AG04450 (cell line): ENCODE measurements at regions of chr16 and their contacts with region 1.

Region 1: DNA sequence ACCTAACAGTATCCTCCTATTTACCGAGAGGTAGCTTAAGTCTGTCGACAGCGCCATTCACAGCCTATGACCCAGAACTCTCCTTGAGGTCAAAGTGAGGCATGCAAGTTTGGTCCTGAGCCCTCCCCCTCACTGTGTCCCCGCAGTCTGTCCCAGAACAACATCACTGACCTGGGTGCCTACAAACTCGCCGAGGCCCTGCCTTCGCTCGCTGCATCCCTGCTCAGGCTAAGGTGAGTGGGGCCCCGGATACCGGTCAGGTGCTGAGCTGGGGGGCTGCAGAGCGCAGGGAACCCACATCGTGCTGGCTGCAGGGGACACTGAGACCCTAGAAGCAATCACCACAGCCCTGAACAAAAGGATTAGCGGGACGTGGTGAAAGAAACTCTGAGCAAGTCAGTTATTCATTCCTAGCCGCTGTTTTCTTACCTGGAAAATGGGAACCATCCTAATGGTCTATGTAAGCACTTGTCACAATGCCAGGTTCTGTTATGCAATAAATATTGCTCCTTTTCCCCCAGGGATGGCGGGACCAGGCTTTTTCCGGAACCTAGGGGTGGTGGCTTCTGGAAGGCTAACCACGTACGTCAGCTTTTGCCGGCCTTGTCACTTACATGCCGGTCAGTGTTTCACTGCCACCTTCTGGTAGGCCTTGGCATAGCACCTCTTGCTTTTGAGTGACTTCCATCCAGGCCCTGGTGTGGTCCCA is 23.8 kb downstream of the DEXI start:
- DNase-seq: peak; percentile 86
- H3K4me3 ChIP-seq: no peak overlapping the region
- H3K27ac ChIP-seq: no peak overlapping the region
- H3K27me3 ChIP-seq: no peaks in the 10 kb centered on the region
- CTCF ChIP-seq: peak; percentile 99

Region 2: GRCh38 chr16:10509534-10510025 is 408.9 kb before region 1 on chr16:
- CTCF ChIA-PET with region 1: interaction called, 46 read pairs
- POLR2A ChIA-PET with region 1: no interaction called
- DNase-seq: peak; percentile 65
- H3K4me3 ChIP-seq: no peak overlapping the region
- H3K27ac ChIP-seq: no peak overlapping the region
- H3K27me3 ChIP-seq: no peaks in the 10 kb centered on the region
- CTCF ChIP-seq: peak; percentile 83

Region 3: GRCh38 chr16:10743610-10744393 is 174.6 kb before region 1 on chr16 and contains the start of gene NUBP1:
- CTCF ChIA-PET with region 1: interaction called, 23 read pairs
- POLR2A ChIA-PET with region 1: no interaction called
- DNase-seq: peak; percentile 94
- H3K4me3 ChIP-seq: peak within 1 kb of the TSS; percentile 79
- H3K27ac ChIP-seq: peak within 1 kb of the TSS; percentile 98
- H3K27me3 ChIP-seq: no peaks in the 10 kb centered on the region
- CTCF ChIP-seq: no peak
- polyA plus RNA-seq, gene NUBP1: 23.0 and 23.6 TPM in 2 replicates

Region 4: DNA sequence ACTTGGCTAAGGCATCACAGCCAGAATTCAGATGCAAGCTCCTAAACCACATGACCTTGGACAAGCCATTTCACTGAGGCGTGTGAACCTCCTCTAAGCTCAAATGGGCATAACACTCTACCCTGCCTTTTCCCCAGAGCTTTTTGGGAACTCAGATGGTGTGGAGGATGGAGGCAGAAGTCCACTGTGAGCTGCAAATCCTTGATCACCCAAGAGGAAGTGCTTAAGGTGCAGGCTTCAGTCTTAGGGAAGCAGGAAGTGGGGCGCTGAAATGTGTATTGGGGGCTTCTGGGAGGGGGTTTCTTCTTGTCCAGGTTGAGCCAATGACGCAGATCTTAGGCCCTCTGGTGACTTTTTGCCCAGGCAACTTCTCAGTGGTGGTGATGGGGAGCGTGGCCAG is 28.6 kb before region 1 on chr16:
- CTCF ChIA-PET with region 1: interaction called, 12 read pairs
- POLR2A ChIA-PET with region 1: no interaction called
- DNase-seq: no peak
- H3K4me3 ChIP-seq: no peak overlapping the region
- H3K27ac ChIP-seq: no peak overlapping the region
- H3K27me3 ChIP-seq: peaks cover 16% of the 10 kb centered on the region
- CTCF ChIP-seq: no peak

Region 5: GRCh38 chr16:10941151-10941908 is 22.9 kb after region 1 on chr16:
- CTCF ChIA-PET with region 1: interaction called, 10 read pairs
- POLR2A ChIA-PET with region 1: no interaction called
- DNase-seq: no peak
- H3K4me3 ChIP-seq: peak overlapping the region; percentile 80
- H3K27ac ChIP-seq: no peak overlapping the region
- H3K27me3 ChIP-seq: no peaks in the 10 kb centered on the region
- CTCF ChIP-seq: no peak